ENCODE measurements at regions of chr10 and their contacts with region 1.

Region 1: GRCh38 chr10:69800109-69800508 is 1.6 kb upstream of the COL13A1 start:
- DNase-seq: peak; percentile 67
- ATAC-seq: peak; percentile 60
- H3K4me3 ChIP-seq: no peak overlapping the region
- H3K27ac ChIP-seq: no peak overlapping the region
- H3K4me1 ChIP-seq: peaks cover 7 to 36% of the 10 kb centered on the region in 2 experiments; a peak in 3 of 4 replicates
- H3K27me3 ChIP-seq: no peaks in the 10 kb centered on the region
- CTCF ChIP-seq: peak; percentile 81 to 87 (median 84); a peak in 5 of 6 replicates
- POLR2A ChIP-seq: no peak
- RAD21 ChIP-seq: peak; percentile 65

Region 2: GRCh38 chr10:69644658-69645295 is 155.3 kb before region 1 on chr10:
- CTCF ChIA-PET with region 1: interaction called, 5 read pairs
- POLR2A ChIA-PET with region 1: no interaction called
- RAD21 ChIA-PET with region 1: interaction called in 1 of 2 experiments, 5 read pairs
- intact Hi-C with region 1: loop called (anchors 1 kb)
- DNase-seq: peak; percentile 35
- ATAC-seq: peak; percentile 84
- H3K4me3 ChIP-seq: no peak overlapping the region
- H3K27ac ChIP-seq: no peak overlapping the region
- H3K4me1 ChIP-seq: peaks cover 4 to 10% of the 10 kb centered on the region in 2 experiments
- H3K27me3 ChIP-seq: no peaks in the 10 kb centered on the region
- CTCF ChIP-seq: peak; percentile 85 to 93 (median 91)
- POLR2A ChIP-seq: no peak
- RAD21 ChIP-seq: peak; percentile 95

Region 3: GRCh38 chr10:69696073-69696731 is 103.9 kb before region 1 on chr10:
- CTCF ChIA-PET with region 1: no interaction called
- POLR2A ChIA-PET with region 1: no interaction called
- RAD21 ChIA-PET with region 1: no interaction called
- intact Hi-C with region 1: loop called (anchors 2 kb)
- DNase-seq: peak; percentile 69
- ATAC-seq: peak; percentile 97
- H3K4me3 ChIP-seq: no peak overlapping the region
- H3K27ac ChIP-seq: no peak overlapping the region
- H3K4me1 ChIP-seq: peaks cover 0 to 9% of the 10 kb centered on the region in 2 experiments; a peak in 3 of 4 replicates
- H3K27me3 ChIP-seq: peaks cover 6% of the 10 kb centered on the region; the same call in 1 of the 2 replicates
- CTCF ChIP-seq: peak; percentile 74 to 86 (median 74)
- POLR2A ChIP-seq: no peak
- RAD21 ChIP-seq: peak; percentile 55

Region 4: DNA sequence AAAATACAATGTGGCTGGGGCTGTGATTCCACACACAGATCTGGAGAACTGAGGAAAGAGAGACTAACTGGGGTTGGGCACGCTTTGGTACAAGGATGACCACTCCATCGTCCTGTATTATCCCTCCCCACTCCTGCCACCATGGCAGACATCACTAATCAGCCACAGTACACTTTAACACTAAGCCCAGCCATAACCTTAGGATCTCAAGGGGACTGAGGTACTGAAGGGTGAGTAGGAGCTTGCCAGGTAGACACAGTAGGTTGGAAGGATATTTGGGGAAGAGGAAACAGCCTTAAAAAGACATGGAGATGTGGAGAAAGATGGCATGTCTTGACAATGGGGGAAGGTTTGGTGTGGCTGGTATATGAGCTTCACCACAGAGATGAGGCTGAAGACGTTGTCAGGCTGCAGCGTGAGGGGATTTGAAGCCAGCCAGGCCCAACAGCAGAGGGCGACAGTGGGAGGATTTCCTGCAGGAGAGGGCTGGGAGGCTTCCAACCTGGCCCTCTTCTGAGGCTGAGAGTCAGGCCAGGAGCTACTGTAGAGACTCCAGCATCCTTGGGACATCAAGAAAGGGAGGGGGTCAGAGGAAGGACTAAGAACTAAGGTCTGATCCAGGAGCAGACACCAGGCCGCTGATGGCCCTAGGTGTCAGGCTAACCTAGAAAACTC is 57.0 kb before region 1 on chr10:
- CTCF ChIA-PET with region 1: interaction called, 12 read pairs
- POLR2A ChIA-PET with region 1: no interaction called
- RAD21 ChIA-PET with region 1: no interaction called
- intact Hi-C with region 1: loop called (anchors 1 kb)
- DNase-seq: peak; percentile 18
- ATAC-seq: peak; percentile 97
- H3K4me3 ChIP-seq: no peak overlapping the region
- H3K27ac ChIP-seq: no peak overlapping the region
- H3K4me1 ChIP-seq: peaks cover 0 to 11% of the 10 kb centered on the region in 2 experiments; a peak in 1 of 4 replicates
- H3K27me3 ChIP-seq: no peaks in the 10 kb centered on the region
- CTCF ChIP-seq: peak; percentile 52 to 77 (median 73); a peak in 5 of 6 replicates
- POLR2A ChIP-seq: no peak
- RAD21 ChIP-seq: peak; percentile 66

Region 5: GRCh38 chr10:69786791-69787190 is 13.3 kb before region 1 on chr10:
- CTCF ChIA-PET with region 1: interaction called, 54 read pairs
- POLR2A ChIA-PET with region 1: no interaction called
- RAD21 ChIA-PET with region 1: no interaction called
- intact Hi-C with region 1: no loop called
- DNase-seq: no peak
- ATAC-seq: peak; percentile 85
- H3K4me3 ChIP-seq: no peak overlapping the region
- H3K27ac ChIP-seq: no peak overlapping the region
- H3K4me1 ChIP-seq: no peaks in the 10 kb centered on the region
- H3K27me3 ChIP-seq: peaks cover 16% of the 10 kb centered on the region
- CTCF ChIP-seq: peak; percentile 42 to 73 (median 49); a peak in 5 of 6 replicates
- POLR2A ChIP-seq: no peak
- RAD21 ChIP-seq: peak; percentile 81

Region 6: DNA sequence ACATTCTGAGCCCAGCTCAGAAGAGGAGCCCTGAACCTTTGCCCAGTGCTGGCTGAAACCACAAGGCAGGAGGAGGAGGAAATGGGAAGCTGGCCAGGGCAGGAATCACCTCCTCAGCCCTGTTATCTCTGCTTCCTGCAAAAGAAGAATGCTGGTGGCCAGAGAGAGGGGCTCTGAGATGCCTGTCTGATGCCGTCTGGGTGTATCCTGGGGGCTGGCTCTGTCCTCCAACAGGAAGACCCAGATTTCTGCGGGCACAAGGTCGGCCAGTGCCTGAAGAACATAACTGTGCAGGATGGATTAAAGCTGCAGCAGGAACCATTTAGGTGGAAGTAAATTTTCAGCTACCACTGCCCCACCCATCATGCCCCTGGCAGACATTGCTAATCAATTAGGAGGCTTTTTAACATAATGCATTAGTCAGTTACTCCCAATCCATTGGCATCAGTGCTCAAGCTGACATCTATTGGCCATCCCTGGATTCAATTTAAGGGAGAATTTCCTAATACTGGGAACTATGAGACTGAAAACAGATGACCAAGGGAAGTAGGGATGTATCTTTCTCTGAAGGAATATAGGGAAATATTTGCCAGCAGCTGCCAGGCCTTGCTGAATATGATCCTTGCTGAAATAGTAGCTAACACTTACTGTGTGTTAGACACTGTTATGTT is 69.3 kb after region 1 on chr10:
- CTCF ChIA-PET with region 1: interaction called, 10 read pairs
- POLR2A ChIA-PET with region 1: no interaction called
- RAD21 ChIA-PET with region 1: no interaction called
- intact Hi-C with region 1: no loop called
- DNase-seq: peak; percentile 56
- ATAC-seq: peak; percentile 65
- H3K4me3 ChIP-seq: peak overlapping the region; percentile 34 to 46
- H3K27ac ChIP-seq: peak overlapping the region; percentile 21
- H3K4me1 ChIP-seq: peaks cover 6 to 55% of the 10 kb centered on the region in 2 experiments; a peak in 2 of 4 replicates
- H3K27me3 ChIP-seq: no peaks in the 10 kb centered on the region
- CTCF ChIP-seq: no peak
- POLR2A ChIP-seq: no peak
- RAD21 ChIP-seq: no peak; the same call in 1 of the 2 replicates

Region 7: GRCh38 chr10:69914398-69915214 is 114.5 kb after region 1 on chr10:
- CTCF ChIA-PET with region 1: interaction called, 8 read pairs
- POLR2A ChIA-PET with region 1: no interaction called
- RAD21 ChIA-PET with region 1: interaction called in 1 of 2 experiments, 3 read pairs
- intact Hi-C with region 1: loop called (anchors 5 kb)
- DNase-seq: peak; percentile 35
- ATAC-seq: peak; percentile 96
- H3K4me3 ChIP-seq: no peak overlapping the region
- H3K27ac ChIP-seq: no peak overlapping the region
- H3K4me1 ChIP-seq: no peaks in the 10 kb centered on the region
- H3K27me3 ChIP-seq: no peaks in the 10 kb centered on the region
- CTCF ChIP-seq: peak; percentile 91 to 95 (median 91)
- POLR2A ChIP-seq: no peak
- RAD21 ChIP-seq: peak; percentile 94